ENCODE measurements at regions of chr1 and their contacts with region 1.

Region 1: DNA sequence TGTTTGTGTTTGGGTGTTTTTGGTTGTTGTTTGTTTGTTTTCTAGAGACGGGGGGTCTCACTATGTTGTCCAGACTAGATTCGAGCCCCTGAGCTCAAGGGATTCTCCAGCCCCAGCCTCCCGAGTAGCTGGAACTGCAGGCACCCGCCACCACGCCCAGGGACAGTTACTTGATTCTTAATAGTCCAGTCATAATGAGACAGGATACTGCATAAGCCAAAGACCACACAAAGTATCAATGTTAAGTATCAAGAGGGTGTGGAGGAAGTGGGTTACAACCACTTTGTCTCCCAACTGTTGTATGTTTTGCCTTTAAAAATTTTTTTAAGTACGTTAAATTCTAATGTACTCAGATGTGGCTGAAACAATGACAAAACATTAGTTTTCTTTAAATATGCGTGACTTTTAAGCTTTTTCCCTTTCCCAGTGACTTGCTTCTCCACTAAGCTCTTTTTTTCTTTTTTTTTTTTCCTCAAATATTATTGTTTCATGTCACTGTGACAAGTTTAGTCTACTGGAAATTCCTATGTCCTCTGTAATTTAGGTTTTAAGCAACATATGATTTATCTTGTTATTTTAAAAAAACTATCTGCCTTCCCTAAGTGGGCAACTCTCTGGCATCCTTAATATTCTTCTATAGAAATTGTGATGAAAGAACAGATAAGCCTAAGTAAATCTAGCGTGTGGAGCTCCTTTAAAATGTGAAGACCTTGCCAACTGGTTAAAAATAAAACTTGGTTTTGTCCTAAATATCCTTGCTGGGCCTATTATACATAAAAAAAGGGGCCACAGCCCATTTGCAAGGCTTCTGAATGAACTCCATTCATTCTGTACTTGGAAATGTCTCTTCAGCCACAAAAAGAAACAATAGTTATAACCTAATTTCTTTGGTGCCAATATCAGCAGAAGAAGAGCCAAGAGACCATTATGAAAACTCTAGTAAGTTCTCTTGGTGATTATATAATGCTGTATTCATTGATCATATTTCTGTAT is 56.2 kb upstream of the DPH5 start:
- DNase-seq: peak in 8 of 9 experiments; percentile 5 to 75 (median 34)
- ATAC-seq: peak; percentile 93
- H3K4me3 ChIP-seq: no peak overlapping the region
- H3K4me3 Mint-ChIP-seq: peak overlapping the region; percentile 56
- H3K27ac ChIP-seq: peak overlapping the region; percentile 14 to 36
- H3K27ac Mint-ChIP-seq: peak overlapping the region; percentile 85
- H3K4me1 ChIP-seq: peaks cover 35% of the 10 kb centered on the region
- H3K4me1 Mint-ChIP-seq: peaks cover 48% of the 10 kb centered on the region
- H3K27me3 ChIP-seq: no peaks in the 10 kb centered on the region
- H3K27me3 Mint-ChIP-seq: no peaks in the 10 kb centered on the region
- CTCF ChIP-seq: no peak

Region 2: GRCh38 chr1:101066260-101066936 is 15.4 kb before region 1 on chr1:
- CTCF ChIA-PET with region 1: interaction called, 4 read pairs
- POLR2A ChIA-PET with region 1: interaction called, 3 read pairs
- intact Hi-C with region 1: loop called in 1 of 2 experiments (anchors 2 kb)
- DNase-seq: peak in 2 of 9 experiments; percentile 6 to 22
- ATAC-seq: peak; percentile 34
- H3K4me3 ChIP-seq: no peak overlapping the region
- H3K4me3 Mint-ChIP-seq: peak overlapping the region; percentile 0
- H3K27ac ChIP-seq: peak overlapping the region in 1 of 2 experiments; percentile 29
- H3K27ac Mint-ChIP-seq: peak overlapping the region; percentile 88
- H3K4me1 ChIP-seq: peaks cover 36% of the 10 kb centered on the region
- H3K4me1 Mint-ChIP-seq: peaks cover 60% of the 10 kb centered on the region
- H3K27me3 ChIP-seq: no peaks in the 10 kb centered on the region
- H3K27me3 Mint-ChIP-seq: no peaks in the 10 kb centered on the region
- CTCF ChIP-seq: no peak

Region 3: GRCh38 chr1:101506541-101507164 is 424.9 kb after region 1 on chr1:
- CTCF ChIA-PET with region 1: no interaction called
- POLR2A ChIA-PET with region 1: no interaction called
- intact Hi-C with region 1: no loop called
- DNase-seq: peak in 7 of 9 experiments; percentile 5 to 65 (median 35)
- ATAC-seq: peak; percentile 54
- H3K4me3 ChIP-seq: no peak overlapping the region
- H3K4me3 Mint-ChIP-seq: no peak overlapping the region
- H3K27ac ChIP-seq: no peak overlapping the region
- H3K27ac Mint-ChIP-seq: no peak overlapping the region
- H3K4me1 ChIP-seq: no peaks in the 10 kb centered on the region
- H3K4me1 Mint-ChIP-seq: no peaks in the 10 kb centered on the region
- H3K27me3 ChIP-seq: no peaks in the 10 kb centered on the region
- H3K27me3 Mint-ChIP-seq: no peaks in the 10 kb centered on the region
- CTCF ChIP-seq: peak; percentile 90